Pancreas (tissue), 10 donors: ENCODE measurements at regions of chr15 and their contacts with region 1.

Region 1: GRCh38 chr15:89421219-89421618 is 75.2 kb downstream of the RHCG start:
- DNase-seq: no peak
- ATAC-seq: no peak
- H3K4me3 ChIP-seq: no peak overlapping the region
- H3K27ac ChIP-seq: no peak overlapping the region
- H3K4me1 ChIP-seq: peaks cover 0 to 5% (median 0%) of the 10 kb centered on the region in 3 donors
- H3K27me3 ChIP-seq: peaks cover 0 to 10% (median 0%) of the 10 kb centered on the region in 4 donors
- CTCF ChIP-seq: no peak

Region 2: DNA sequence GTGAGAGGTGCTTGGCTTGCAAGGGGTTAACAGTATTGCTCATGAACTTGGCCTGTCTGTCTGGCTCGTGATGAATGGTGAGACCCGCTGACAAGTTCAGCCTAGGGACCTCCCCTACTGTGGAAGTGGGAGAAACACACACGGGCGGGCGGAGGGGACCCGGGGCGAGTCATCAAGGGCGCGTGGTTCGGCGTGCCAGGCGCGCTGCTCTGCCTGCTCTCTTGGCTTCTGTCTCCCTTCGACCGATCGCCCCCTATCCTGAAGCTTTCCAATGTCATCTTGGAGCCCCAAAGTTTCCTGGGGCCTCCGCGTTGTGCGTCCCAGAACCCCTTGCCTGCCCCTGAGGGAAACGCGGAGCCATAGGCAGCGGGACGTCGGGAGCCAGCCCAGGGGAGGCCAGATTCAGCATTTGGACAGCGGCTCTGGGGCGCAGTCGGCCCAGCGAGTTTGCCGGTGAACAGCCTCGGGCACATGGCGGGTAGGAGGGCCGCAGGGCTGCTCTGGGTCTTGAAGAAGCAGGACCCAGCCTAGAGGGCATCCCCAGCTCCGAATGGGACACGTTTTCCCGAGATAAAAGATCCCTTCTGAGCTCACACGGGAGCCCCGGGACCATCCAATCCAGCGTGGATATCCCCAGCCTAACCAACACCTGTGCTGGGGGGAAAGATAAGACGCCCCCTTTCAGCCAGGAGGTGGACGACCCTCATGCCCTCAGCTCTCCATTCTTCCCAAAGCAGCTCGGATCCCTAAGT is 59.6 kb before region 1 on chr15:
- intact Hi-C with region 1: loop called in 2 of 3 experiments (anchors 5 kb)
- DNase-seq: peak; percentile 64 to 94 (median 83)
- ATAC-seq: peak; percentile 64 to 77 (median 72)
- H3K4me3 ChIP-seq: peak overlapping the region in 1 of 4 donors; percentile 28
- H3K27ac ChIP-seq: no peak overlapping the region
- H3K4me1 ChIP-seq: peaks cover 5 to 12% (median 9%) of the 10 kb centered on the region in 3 donors
- H3K27me3 ChIP-seq: peaks cover 0 to 74% (median 22%) of the 10 kb centered on the region in 4 donors
- CTCF ChIP-seq: no peak